ENCODE measurements at regions of chr14 and their contacts with region 1.

Region 1: GRCh38 chr14:67704484-67705089 is 2.9 kb downstream of the RDH12 start:
- DNase-seq: peak in 2 of 5 donors; percentile 45 to 51
- H3K4me3 ChIP-seq: no peak overlapping the region
- H3K4me3 Mint-ChIP-seq: no peak overlapping the region
- H3K27ac ChIP-seq: no peak overlapping the region
- H3K27ac Mint-ChIP-seq: peak overlapping the region in 1 of 8 donors; percentile 16
- H3K4me1 ChIP-seq: no peaks in the 10 kb centered on the region
- H3K4me1 Mint-ChIP-seq: no peaks in the 10 kb centered on the region
- H3K27me3 ChIP-seq: no peaks in the 10 kb centered on the region
- H3K27me3 Mint-ChIP-seq: peaks cover 0 to 5% of the 10 kb centered on the region in 2 donors

Region 2: GRCh38 chr14:67526676-67527459 is 177.7 kb before region 1 on chr14:
- CTCF ChIA-PET with region 1: interaction called, 16 read pairs
- POLR2A ChIA-PET with region 1: no interaction called
- DNase-seq: peak in 2 of 5 donors; percentile 18 to 34
- H3K4me3 ChIP-seq: no peak overlapping the region
- H3K4me3 Mint-ChIP-seq: no peak overlapping the region
- H3K27ac ChIP-seq: no peak overlapping the region
- H3K27ac Mint-ChIP-seq: no peak overlapping the region
- H3K4me1 ChIP-seq: no peaks in the 10 kb centered on the region
- H3K4me1 Mint-ChIP-seq: peaks cover 0 to 3% (median 0%) of the 10 kb centered on the region in 3 donors
- H3K27me3 ChIP-seq: no peaks in the 10 kb centered on the region
- H3K27me3 Mint-ChIP-seq: peaks cover 31 to 37% of the 10 kb centered on the region in 2 donors

Region 3: DNA sequence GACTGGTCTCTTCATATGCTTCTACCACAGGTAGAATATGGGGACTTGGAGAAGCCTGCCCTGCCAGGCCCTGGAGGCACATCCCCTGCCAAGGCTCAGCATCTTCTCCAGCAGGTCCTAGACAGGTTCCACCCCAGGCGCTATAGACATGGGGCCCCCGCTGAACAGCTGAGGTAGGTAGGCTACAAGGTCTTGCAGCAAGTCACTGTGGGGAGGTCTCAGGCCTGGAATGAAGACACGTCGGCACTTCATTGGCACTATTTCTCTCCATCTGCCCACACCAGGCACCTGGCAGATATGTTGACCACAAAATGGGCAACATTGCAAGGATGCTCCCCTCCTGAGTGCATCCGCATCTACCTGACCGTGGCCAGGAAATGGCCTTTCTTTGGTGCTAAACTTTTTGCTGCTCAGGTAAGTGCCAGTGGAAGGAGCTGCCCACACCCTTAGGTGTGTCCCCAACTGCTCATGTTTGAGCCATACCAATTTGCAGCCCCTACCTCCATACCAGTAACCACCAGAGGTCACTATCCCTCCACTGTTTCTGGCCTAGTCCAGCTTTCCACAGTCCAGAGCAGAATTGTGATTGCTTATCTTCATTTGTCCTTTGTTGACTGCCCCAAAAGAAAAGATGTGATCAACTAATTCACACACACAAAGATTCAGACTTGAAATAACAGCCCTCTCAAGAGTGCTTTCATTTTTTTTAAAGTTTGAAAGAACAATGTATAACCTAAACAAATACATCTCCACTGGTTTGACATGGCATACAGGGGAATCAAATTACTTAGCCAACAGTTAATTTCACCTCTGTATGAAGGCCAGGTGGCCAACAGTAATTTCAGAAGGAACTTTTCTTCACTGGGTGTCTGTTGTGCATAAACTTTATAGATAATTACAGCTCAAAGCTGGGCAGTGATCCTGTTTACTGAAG is 120.6 kb before region 1 on chr14:
- CTCF ChIA-PET with region 1: interaction called, 57 read pairs
- POLR2A ChIA-PET with region 1: no interaction called
- DNase-seq: peak in 3 of 5 donors; percentile 8 to 51 (median 21)
- H3K4me3 ChIP-seq: no peak overlapping the region
- H3K4me3 Mint-ChIP-seq: no peak overlapping the region
- H3K27ac ChIP-seq: no peak overlapping the region
- H3K27ac Mint-ChIP-seq: no peak overlapping the region
- H3K4me1 ChIP-seq: no peaks in the 10 kb centered on the region
- H3K4me1 Mint-ChIP-seq: no peaks in the 10 kb centered on the region
- H3K27me3 ChIP-seq: no peaks in the 10 kb centered on the region
- H3K27me3 Mint-ChIP-seq: no peaks in the 10 kb centered on the region

Region 4: GRCh38 chr14:67599698-67600561 is 104.7 kb before region 1 on chr14 and contains the start of gene PIGH:
- CTCF ChIA-PET with region 1: interaction called, 21 read pairs
- POLR2A ChIA-PET with region 1: interaction called, 7 read pairs
- DNase-seq: peak; percentile 92 to 95 (median 94)
- H3K4me3 ChIP-seq: peak within 1 kb of the TSS; percentile 90
- H3K4me3 Mint-ChIP-seq: peak within 1 kb of the TSS; percentile 91 to 99 (median 96)
- H3K27ac ChIP-seq: peak within 1 kb of the TSS; percentile 72
- H3K27ac Mint-ChIP-seq: peak within 1 kb of the TSS; percentile 83 to 99 (median 96)
- H3K4me1 ChIP-seq: peaks cover 31% of the 10 kb centered on the region
- H3K4me1 Mint-ChIP-seq: peaks cover 40 to 57% (median 54%) of the 10 kb centered on the region in 3 donors
- H3K27me3 ChIP-seq: no peaks in the 10 kb centered on the region
- H3K27me3 Mint-ChIP-seq: peaks cover 0 to 2% of the 10 kb centered on the region in 2 donors
- total RNA-seq, gene PIGH: 24.2 to 26.1 TPM

Region 5: DNA sequence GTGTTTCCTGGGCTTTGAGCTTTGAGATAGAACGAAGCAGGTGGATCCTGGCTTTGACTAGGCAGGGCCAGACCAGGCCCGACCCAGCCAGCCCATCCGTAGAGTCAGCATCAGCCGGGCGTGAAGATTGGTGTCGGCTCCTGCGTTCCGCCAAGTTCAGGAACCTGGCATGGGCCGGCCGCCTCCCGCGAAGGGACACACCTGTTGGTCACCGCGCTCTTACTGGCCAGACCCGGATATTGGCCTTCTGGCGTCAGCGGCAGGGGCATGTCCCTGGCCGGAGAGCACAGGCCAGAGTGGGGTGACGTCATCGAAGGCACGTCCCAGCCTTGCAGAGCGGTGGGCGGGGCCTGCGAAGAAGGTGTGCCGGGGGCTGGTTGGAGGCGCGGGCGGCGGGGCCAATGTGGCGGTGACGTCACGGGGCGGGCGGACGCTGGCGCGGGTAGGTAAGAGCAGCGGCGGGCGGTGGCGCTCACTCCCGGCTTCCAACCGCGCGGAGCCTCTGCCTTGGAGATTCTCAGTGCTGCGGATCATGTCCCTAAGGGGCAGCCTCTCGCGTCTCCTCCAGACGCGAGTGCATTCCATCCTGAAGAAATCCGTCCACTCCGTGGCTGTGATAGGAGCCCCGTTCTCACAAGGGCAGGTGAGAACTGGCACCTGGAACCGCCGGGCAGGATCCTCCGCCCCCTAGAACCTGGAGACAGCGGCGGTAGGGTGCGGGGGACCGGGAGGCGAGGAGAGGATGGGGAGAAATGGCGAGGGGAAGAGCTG is 85.0 kb before region 1 on chr14 and contains the start of gene ARG2:
- CTCF ChIA-PET with region 1: interaction called, 63 read pairs
- POLR2A ChIA-PET with region 1: interaction called, 5 read pairs
- DNase-seq: peak; percentile 95 to 98 (median 98)
- H3K4me3 ChIP-seq: peak within 1 kb of the TSS; percentile 82
- H3K4me3 Mint-ChIP-seq: peak within 1 kb of the TSS; percentile 85 to 93 (median 88)
- H3K27ac ChIP-seq: peak within 1 kb of the TSS; percentile 90
- H3K27ac Mint-ChIP-seq: peak within 1 kb of the TSS; percentile 90 to 99 (median 97)
- H3K4me1 ChIP-seq: peaks cover 31% of the 10 kb centered on the region
- H3K4me1 Mint-ChIP-seq: peaks cover 20 to 26% (median 22%) of the 10 kb centered on the region in 3 donors
- H3K27me3 ChIP-seq: no peaks in the 10 kb centered on the region
- H3K27me3 Mint-ChIP-seq: peaks cover 5 to 10% of the 10 kb centered on the region in 2 donors
- total RNA-seq, gene ARG2: 2.3 to 2.8 TPM

Region 6: DNA sequence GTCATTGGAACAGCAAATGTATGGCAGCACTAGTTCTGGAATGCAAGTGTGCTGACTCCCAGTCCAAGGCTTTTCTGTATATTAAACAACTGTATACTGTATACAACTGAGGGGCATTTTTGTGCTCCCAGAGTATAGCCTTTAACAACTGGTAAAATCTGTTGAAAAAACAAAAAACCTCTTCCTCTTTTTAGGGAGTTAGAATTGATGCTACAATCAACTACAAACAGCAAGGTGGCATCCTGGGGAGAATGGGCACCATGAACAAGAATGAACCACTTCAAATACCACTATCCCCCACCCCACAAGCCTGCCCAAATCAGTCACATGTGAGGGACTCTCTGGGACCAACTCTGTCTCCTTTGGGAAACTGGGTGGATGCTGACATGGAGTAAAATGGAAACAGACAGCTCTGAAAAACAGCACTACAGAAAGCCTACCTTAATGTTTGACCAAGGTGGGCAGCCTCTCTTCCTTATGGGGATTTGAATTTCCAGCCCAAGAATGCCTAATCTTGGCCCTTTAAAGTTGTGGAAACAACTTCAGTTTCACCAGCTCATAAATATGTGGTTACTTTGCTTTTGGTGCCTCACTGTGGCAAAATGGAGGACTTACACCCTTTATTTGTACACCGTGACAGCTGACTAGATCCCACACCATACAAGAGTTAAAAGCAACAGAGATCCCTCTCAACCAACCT is 37.7 kb before region 1 on chr14:
- CTCF ChIA-PET with region 1: interaction called, 11 read pairs
- POLR2A ChIA-PET with region 1: interaction called, 3 read pairs
- DNase-seq: peak in 2 of 5 donors; percentile 25 to 38
- H3K4me3 ChIP-seq: no peak overlapping the region
- H3K4me3 Mint-ChIP-seq: peak overlapping the region in 2 of 7 donors; percentile 17 to 78
- H3K27ac ChIP-seq: no peak overlapping the region
- H3K27ac Mint-ChIP-seq: peak overlapping the region in 7 of 8 donors; percentile 34 to 86 (median 63)
- H3K4me1 ChIP-seq: peaks cover 23% of the 10 kb centered on the region
- H3K4me1 Mint-ChIP-seq: peaks cover 57 to 82% (median 75%) of the 10 kb centered on the region in 3 donors
- H3K27me3 ChIP-seq: no peaks in the 10 kb centered on the region
- H3K27me3 Mint-ChIP-seq: no peaks in the 10 kb centered on the region

Measured in CD8-positive, alpha-beta memory T cell (primary cell).